Activated CD4-positive, alpha-beta T cell treated with anti-CD3 and anti-CD28 coated beads for 36 hours (primary cell): ENCODE measurements at regions of chr4 and their contacts with region 1.

Region 1: DNA sequence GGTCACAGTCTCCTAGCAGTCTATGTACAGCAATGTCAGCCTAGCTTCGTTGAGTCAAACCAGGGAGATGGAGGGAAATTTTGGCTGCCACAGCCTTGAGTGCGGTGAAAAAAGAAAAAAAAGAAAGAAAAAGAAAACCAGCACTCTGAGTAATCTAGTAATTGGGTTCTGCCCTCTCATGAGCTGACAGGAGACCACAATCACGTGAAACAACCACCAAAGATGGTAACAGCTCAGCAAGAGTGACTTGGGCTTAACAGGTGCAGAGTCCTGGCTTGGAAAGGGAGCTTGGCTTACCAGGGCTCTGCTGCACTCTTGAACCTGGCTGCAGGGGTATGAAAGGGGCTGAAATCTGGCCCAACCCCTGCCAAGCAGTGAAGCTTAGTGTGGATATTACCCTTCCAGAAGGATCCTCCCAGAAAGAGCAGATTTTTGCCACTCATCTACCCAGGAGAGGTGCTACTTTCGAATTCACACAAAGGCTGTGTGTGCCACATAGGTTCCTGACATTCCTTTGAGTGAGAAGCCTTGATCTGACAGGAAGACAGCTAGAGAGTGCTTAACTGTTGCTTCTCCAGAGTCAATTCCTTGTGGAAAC is 350.3 kb downstream of the PTTG2 start:
- DNase-seq: peak; percentile 84
- ATAC-seq: peak; percentile 87
- H3K4me3 Mint-ChIP-seq: peak overlapping the region; percentile 14
- H3K27ac Mint-ChIP-seq: peak overlapping the region; percentile 78
- H3K4me1 Mint-ChIP-seq: peaks cover 64% of the 10 kb centered on the region
- H3K27me3 Mint-ChIP-seq: peaks cover 18% of the 10 kb centered on the region

Region 2: DNA sequence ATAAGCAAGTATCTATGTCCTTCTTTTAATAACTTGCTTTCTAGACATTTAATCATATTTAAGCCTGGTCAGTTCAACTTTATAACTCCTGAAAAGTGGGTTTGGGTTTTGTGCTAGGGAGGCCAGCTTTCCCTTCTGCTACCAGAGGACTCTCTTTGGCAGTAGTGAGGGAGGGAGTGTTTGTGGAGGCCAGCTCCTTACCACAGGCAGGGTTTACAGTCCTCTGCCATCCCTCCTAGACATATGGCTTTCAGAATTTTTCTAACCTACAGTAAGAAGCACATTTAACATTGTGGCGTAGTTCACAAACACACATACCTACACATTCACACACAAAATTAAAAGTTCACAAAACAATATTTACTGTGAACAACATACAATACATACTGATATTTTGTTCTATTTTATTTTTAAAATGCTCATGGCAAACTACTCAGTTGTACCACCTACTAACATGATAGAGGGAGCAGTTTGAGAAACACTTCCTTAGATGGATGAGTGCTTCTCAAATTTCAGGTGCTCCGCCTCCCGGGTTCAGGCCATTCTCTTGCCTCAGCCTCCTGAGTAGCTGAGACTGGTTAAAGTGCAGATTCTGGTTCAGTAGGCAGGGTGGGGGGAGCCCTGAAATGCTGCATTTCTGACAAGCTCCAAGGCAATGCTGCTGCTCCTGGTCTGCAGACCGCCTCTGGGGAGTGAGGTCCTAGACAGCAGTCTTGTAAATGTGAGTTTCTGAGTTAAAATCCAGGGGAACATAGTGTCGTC is 263.6 kb before region 1 on chr4:
- CTCF ChIA-PET with region 1: no interaction called
- POLR2A ChIA-PET with region 1: no interaction called
- intact Hi-C with region 1: no loop called
- DNase-seq: no peak
- ATAC-seq: no peak
- H3K4me3 Mint-ChIP-seq: no peak overlapping the region
- H3K27ac Mint-ChIP-seq: no peak overlapping the region
- H3K4me1 Mint-ChIP-seq: no peaks in the 10 kb centered on the region
- H3K27me3 Mint-ChIP-seq: no peaks in the 10 kb centered on the region

Region 3: DNA sequence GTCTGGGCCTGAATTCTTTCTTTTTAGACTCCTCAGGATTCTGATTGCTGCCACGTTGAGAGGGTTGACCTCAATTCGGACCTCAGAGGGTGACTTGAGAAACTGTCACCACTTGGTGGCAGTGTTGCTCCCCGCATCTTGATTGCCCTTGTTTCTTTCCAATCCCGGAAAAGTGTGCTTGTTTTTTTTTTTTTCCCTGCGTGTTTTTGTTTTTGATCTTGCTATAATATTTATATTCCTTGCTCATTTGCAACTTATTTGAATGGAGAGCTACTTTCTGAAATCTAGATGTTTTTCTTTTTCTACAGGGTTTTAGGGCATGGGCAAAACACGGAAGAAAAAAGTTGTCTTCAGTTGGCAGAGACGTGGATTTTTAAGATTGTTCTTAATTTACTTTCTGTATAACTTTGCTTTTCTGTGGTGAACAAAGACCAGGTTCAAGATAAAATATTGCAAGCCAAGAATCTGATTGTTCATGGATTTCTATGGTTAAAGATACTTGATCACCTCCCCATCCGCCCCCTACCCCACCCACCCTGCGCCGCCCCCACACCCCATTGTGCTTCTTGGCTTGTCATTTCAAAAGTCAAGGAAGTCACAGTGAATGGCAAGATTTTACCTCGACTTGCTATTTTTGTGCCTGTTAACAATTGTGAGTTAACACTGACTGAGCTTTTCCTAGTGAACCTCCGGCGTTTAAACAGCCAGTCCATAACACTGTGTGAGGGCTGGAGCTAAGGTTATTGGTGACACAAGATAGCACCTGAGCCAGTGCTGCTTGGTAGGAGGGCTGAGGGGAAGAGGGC is 248.3 kb before region 1 on chr4:
- CTCF ChIA-PET with region 1: no interaction called
- POLR2A ChIA-PET with region 1: no interaction called
- intact Hi-C with region 1: loop called (anchors 2 to 5 kb)
- DNase-seq: peak; percentile 82
- ATAC-seq: peak; percentile 79
- H3K4me3 Mint-ChIP-seq: peak overlapping the region; percentile 75
- H3K27ac Mint-ChIP-seq: peak overlapping the region; percentile 87
- H3K4me1 Mint-ChIP-seq: peaks cover 14% of the 10 kb centered on the region
- H3K27me3 Mint-ChIP-seq: no peaks in the 10 kb centered on the region

Region 4: DNA sequence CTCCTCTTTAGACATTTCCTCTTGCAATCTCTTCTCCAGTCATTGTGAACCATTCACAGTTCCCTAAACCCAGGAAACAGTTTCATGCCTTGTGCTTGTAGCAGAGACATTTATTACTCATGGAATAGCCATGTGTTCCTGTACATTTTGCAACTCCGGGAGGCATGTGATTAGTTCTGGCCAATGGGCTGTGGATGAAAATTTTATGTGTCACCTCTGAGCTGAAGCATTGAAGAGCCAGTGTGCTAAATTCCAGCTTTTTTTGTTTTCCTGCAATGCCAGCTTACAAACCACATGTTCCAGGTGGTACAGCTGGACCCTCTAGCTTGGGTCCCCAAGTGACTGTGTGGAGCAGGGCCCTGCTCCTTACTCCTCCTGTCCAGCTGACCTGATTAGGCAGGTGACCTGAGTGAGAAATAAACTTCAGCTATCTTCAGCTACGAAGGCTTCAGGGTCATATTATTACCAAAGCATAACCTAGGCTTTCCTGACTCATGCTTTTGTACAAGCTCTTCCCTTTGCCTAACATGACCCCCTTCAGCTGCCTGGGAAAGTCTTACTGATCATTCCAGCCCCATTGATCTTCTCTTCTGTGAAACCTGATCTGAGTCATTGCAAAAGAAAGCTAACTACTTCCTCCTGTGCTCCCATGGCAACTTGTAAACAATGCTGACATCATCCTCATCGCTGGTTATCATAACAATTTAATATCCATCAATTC is 149.9 kb before region 1 on chr4:
- CTCF ChIA-PET with region 1: interaction called, 3 read pairs
- POLR2A ChIA-PET with region 1: no interaction called
- intact Hi-C with region 1: loop called in 1 of 2 experiments (anchors 1 kb)
- DNase-seq: peak; percentile 69
- ATAC-seq: peak; percentile 79
- H3K4me3 Mint-ChIP-seq: no peak overlapping the region
- H3K27ac Mint-ChIP-seq: peak overlapping the region; percentile 73
- H3K4me1 Mint-ChIP-seq: peaks cover 70% of the 10 kb centered on the region
- H3K27me3 Mint-ChIP-seq: no peaks in the 10 kb centered on the region

Region 5: GRCh38 chr4:38223782-38224236 is 86.7 kb before region 1 on chr4:
- CTCF ChIA-PET with region 1: no interaction called
- POLR2A ChIA-PET with region 1: no interaction called
- intact Hi-C with region 1: no loop called
- DNase-seq: no peak
- ATAC-seq: no peak
- H3K4me3 Mint-ChIP-seq: no peak overlapping the region
- H3K27ac Mint-ChIP-seq: no peak overlapping the region
- H3K4me1 Mint-ChIP-seq: no peaks in the 10 kb centered on the region
- H3K27me3 Mint-ChIP-seq: no peaks in the 10 kb centered on the region

Region 6: DNA sequence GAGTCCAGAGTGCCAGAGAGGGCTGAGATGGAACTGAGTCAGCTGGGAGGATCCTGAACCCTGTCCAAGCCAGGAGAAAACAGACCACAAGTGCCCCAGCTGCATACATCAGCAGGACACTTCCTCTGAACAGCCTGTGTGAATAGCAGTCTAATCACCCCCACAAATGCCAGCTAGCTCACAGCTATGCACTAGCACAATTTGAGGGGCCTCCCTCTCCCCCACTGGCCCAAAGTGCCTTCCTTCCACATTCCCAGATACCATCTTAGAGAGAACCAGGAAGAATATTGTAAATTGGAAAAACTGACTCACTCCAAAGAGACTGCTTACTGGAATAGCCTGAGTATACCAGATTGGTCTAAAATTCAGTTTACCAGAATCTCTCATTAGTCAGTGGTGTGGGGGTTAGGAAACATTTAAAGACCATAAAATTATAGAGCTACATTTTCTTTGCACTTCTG is 60.9 kb after region 1 on chr4:
- CTCF ChIA-PET with region 1: no interaction called
- POLR2A ChIA-PET with region 1: no interaction called
- intact Hi-C with region 1: no loop called
- DNase-seq: no peak
- ATAC-seq: peak; percentile 39
- H3K4me3 Mint-ChIP-seq: no peak overlapping the region
- H3K27ac Mint-ChIP-seq: no peak overlapping the region
- H3K4me1 Mint-ChIP-seq: peaks cover 35% of the 10 kb centered on the region
- H3K27me3 Mint-ChIP-seq: no peaks in the 10 kb centered on the region

Region 7: GRCh38 chr4:38455092-38455862 is 144.7 kb after region 1 on chr4:
- CTCF ChIA-PET with region 1: interaction called, 3 read pairs
- POLR2A ChIA-PET with region 1: no interaction called
- intact Hi-C with region 1: loop called (anchors 2 to 5 kb)
- DNase-seq: no peak
- ATAC-seq: peak; percentile 72
- H3K4me3 Mint-ChIP-seq: peak overlapping the region; percentile 2
- H3K27ac Mint-ChIP-seq: peak overlapping the region; percentile 57
- H3K4me1 Mint-ChIP-seq: peaks cover 54% of the 10 kb centered on the region
- H3K27me3 Mint-ChIP-seq: peaks cover 12% of the 10 kb centered on the region

Region 8: DNA sequence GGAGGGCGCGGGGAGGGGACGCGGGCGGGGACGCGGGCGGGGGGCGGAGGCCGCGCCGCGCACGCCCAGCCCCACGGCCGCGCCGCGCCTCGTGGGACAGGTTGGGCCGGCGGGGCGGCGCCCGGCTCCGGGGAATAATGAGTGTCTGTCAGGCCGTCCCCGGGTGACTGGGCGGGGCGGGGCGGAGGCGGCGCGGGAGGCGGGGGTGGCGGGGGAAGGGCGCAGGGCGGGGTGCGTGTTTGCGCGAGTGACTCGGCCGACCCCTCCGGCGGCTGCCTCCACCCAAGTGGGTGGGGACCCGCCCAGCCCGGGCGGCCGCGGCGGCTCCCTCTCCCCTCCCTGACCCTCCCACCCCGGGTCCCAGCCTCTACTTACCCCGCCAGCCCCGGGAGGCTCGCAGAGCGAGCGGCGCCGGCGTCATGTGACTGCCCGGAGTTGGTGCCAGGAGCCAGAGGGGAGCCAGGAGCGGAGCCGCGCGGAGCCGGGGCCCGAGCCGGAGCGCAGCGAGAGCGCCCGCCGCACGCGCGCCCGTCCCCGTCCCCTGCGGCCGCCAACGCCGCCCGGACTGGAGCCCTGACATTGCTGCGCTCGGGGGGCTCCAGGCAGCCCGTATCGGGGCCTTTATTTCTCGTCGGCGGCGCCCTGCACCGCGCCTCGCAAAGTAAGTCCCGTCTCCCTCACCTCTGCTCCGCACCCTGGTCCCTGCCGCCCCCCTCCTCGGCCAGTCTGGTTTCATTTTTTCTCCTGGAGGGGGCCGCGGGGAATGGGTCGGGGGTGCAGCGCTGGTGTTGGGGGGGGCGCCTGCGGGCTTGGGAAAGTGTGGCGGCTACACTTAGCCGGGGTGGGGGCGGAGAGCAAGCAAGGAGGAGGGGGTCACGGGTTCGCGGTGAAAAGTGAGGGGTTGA is 353.5 kb after region 1 on chr4 and contains the start of gene KLF3:
- CTCF ChIA-PET with region 1: interaction called, 6 read pairs
- POLR2A ChIA-PET with region 1: interaction called, 4 read pairs
- intact Hi-C with region 1: loop called (anchors 1 to 2 kb)
- DNase-seq: peak; percentile 84
- ATAC-seq: peak; percentile 62
- H3K4me3 Mint-ChIP-seq: peak within 1 kb of the TSS; percentile 88
- H3K27ac Mint-ChIP-seq: peak within 1 kb of the TSS; percentile 78
- H3K4me1 Mint-ChIP-seq: peaks cover 61% of the 10 kb centered on the region
- H3K27me3 Mint-ChIP-seq: no peaks in the 10 kb centered on the region
- total RNA-seq, gene KLF3: 6.1 to 6.2 TPM

Region 9: GRCh38 chr4:38889143-38889542 is 578.6 kb after region 1 on chr4:
- CTCF ChIA-PET with region 1: no interaction called
- POLR2A ChIA-PET with region 1: no interaction called
- intact Hi-C with region 1: loop called in 1 of 2 experiments (anchors 5 kb)
- DNase-seq: no peak
- ATAC-seq: peak; percentile 78
- H3K4me3 Mint-ChIP-seq: peak overlapping the region; percentile 52
- H3K27ac Mint-ChIP-seq: peak overlapping the region; percentile 88
- H3K4me1 Mint-ChIP-seq: peaks cover 18% of the 10 kb centered on the region
- H3K27me3 Mint-ChIP-seq: no peaks in the 10 kb centered on the region

Region 10: GRCh38 chr4:39004758-39005157 is 694.2 kb after region 1 on chr4:
- CTCF ChIA-PET with region 1: no interaction called
- POLR2A ChIA-PET with region 1: no interaction called
- intact Hi-C with region 1: no loop called
- DNase-seq: no peak
- ATAC-seq: no peak
- H3K4me3 Mint-ChIP-seq: no peak overlapping the region
- H3K27ac Mint-ChIP-seq: no peak overlapping the region
- H3K4me1 Mint-ChIP-seq: peaks cover 16% of the 10 kb centered on the region
- H3K27me3 Mint-ChIP-seq: no peaks in the 10 kb centered on the region